MCF 10A (cell line): ENCODE measurements at regions of chr17 and their contacts with region 1.

Region 1: GRCh38 chr17:76557368-76558197 is 17.7 kb downstream of the PRCD start:
- DNase-seq: peak; percentile 96
- H3K4me3 Mint-ChIP-seq: peak overlapping the region; percentile 92
- H3K27ac Mint-ChIP-seq: peak overlapping the region; percentile 97
- H3K4me1 Mint-ChIP-seq: peaks cover 19% of the 10 kb centered on the region
- H3K27me3 Mint-ChIP-seq: no peaks in the 10 kb centered on the region
- CTCF ChIP-seq: no peak

Region 2: DNA sequence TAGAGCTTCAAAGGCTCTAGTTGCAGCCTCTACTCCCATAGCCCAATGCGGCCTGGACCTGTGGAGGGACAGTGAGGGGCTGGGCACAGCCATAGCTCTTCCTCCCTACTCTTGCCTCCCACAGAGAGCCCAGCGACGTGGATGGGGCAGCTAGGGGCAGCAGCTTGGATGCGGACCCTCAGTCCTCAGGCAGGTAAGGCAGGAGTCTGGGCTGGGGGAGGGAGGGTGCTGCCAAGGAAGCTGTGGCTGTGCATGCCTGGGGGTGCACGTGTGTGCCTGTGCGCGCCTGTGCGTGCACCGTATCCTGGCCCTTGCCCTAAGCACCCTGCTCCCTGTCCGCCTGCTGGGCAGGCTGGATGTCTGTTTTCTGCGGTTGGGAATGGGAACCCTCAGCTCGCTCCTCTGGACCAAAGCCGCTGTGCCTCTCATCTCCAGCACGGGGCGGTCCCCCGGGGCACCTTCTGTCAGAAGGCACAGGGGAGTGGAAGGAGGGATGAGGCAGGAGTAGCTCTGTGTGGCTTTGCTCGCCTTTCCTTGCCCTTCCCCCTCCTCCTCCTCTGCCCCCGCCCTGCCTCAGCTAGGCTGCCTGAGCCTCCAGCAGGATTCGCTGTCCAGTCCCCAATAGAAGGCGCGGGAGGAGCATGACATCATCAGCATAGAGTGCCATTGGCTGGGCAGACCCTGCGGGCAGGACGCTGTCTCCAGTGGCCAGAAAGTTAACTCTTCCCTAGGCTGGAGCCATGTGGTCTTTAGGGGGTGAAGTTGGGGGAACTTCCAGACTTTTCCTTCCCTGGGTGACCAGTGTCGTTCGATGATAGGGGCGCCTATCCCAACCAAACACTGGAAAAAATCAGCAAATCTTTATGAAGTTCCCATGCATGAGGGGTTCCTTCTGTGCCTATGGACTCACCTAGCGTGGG is 16.9 kb before region 1 on chr17:
- CTCF ChIA-PET with region 1: interaction called, 26 read pairs
- POLR2A ChIA-PET with region 1: interaction called, 68 read pairs
- intact Hi-C with region 1: no loop called
- DNase-seq: peak; percentile 96
- H3K4me3 Mint-ChIP-seq: peak overlapping the region; percentile 69
- H3K27ac Mint-ChIP-seq: no peak overlapping the region
- H3K4me1 Mint-ChIP-seq: no peaks in the 10 kb centered on the region
- H3K27me3 Mint-ChIP-seq: peaks cover 12% of the 10 kb centered on the region
- CTCF ChIP-seq: peak; percentile 21

Region 3: DNA sequence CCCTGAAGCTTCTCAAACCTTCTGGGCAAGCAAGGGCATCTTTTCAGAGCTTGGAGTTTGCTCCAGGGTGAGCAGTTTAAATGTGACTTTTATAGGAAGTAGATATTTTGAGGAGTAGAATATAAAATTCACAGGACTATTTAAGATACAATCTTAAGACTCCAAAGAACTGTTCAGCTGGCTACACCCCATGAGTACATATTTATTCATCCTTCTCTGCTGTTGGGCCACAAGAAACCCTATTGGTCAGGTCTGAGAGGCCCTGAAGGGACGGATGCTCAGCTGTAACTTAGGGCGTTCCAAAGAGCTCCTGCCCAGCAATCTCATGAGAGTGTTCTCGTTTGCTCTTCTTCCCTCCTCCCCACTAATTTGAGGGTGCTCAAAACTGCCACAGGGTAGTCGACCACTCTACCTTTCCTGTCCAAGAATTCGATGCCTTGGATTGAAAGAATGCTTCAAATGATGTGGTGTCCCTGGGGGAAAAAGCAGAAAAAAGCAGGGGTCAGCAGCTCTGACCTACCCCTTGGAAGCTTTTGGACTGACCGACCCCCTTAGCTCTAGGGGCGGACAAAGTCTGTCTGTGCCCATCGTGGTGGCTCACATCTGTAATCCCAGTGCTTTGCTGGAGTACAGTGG is 20.9 kb after region 1 on chr17:
- CTCF ChIA-PET with region 1: interaction called, 4 read pairs
- POLR2A ChIA-PET with region 1: interaction called, 171 read pairs
- intact Hi-C with region 1: no loop called
- DNase-seq: no peak
- H3K4me3 Mint-ChIP-seq: no peak overlapping the region
- H3K27ac Mint-ChIP-seq: no peak overlapping the region
- H3K4me1 Mint-ChIP-seq: peaks cover 14% of the 10 kb centered on the region
- H3K27me3 Mint-ChIP-seq: no peaks in the 10 kb centered on the region
- CTCF ChIP-seq: no peak

Region 4: GRCh38 chr17:76623271-76624146 is 65.9 kb after region 1 on chr17:
- CTCF ChIA-PET with region 1: interaction called, 43 read pairs
- POLR2A ChIA-PET with region 1: interaction called, 61 read pairs
- intact Hi-C with region 1: loop called (anchors 1 kb)
- DNase-seq: peak; percentile 65
- H3K4me3 Mint-ChIP-seq: no peak overlapping the region
- H3K27ac Mint-ChIP-seq: no peak overlapping the region
- H3K4me1 Mint-ChIP-seq: peaks cover 14% of the 10 kb centered on the region
- H3K27me3 Mint-ChIP-seq: no peaks in the 10 kb centered on the region
- CTCF ChIP-seq: peak; percentile 92

Region 5: DNA sequence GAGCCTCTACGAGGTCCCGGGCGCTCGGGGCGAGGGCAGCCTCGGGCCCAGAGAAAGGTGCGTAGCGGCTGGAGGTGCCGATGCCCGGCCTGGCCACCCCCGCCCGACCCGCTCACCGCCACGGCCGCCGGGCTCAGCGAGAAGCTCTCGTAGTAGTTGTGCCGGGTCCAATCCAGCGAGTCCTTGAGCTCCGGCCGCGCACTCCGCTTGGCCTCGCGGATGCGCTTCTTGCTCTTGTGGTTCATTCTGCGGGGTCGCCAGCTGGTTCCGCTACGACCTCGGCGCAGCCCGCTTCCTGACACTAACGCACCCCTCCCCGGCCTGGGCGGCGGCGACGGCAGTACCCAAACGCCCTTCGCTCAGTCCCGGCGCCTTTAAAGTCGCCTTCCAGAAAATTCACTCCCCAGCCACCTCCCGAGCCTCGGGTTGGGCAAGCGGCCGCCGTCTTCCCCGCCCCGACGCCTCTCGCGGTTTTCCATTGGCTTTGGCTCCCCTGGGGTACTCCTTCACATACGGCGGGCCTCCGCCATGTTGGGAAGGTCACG is 168.7 kb after region 1 on chr17 and contains the start of gene JMJD6:
- CTCF ChIA-PET with region 1: no interaction called
- POLR2A ChIA-PET with region 1: interaction called, 76 read pairs
- intact Hi-C with region 1: no loop called
- DNase-seq: peak; percentile 97
- H3K4me3 Mint-ChIP-seq: peak within 1 kb of the TSS; percentile 90
- H3K27ac Mint-ChIP-seq: peak within 1 kb of the TSS; percentile 94
- H3K4me1 Mint-ChIP-seq: peaks cover 6% of the 10 kb centered on the region
- H3K27me3 Mint-ChIP-seq: no peaks in the 10 kb centered on the region
- CTCF ChIP-seq: no peak
- total RNA-seq, gene JMJD6: 29.4 and 45.8 TPM in 2 replicates